Right ventricle myocardium inferior (tissue), 1 donor: ENCODE measurements at regions of chr4 and their contacts with region 1.

Region 1: DNA sequence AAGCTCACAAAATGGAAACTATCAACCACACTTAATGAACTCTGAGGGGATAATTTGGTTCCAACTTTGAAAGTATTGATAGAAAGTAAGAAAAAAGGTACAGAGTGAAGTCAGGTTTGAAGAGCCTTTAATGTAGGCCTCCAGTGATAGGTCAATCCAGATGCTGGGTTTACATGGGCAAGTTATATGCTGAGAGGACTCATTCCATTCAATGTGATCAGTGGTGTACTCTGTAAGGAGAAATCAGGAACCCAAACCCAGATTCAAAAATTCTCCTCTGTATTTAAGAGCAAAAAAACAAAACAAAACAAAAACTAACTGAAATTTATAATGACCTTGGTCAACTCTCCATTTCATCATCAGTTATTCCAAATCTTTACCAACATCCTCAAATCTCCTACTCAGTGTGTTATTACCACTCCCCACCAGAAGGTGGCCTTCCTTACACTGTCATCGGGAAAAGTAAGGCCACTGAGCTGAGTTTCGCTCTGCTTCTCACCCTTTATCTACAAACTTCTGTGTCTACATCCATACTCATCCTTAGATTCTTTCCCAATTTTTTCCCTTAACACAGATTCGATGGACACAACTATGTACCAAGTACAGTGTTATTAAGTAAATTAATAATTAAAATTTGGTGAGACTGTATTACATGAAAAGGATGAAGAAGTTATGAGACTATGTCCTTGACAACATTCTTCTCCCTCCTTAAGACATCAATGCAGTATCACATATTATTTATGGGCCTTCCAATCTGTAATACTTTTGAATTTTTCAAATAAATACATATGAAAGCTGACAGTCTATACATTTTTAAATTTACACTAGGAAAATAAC is 88.3 kb downstream of the ZAR1 start:
- DNase-seq: no peak
- ATAC-seq: peak; percentile 74

Region 2: DNA sequence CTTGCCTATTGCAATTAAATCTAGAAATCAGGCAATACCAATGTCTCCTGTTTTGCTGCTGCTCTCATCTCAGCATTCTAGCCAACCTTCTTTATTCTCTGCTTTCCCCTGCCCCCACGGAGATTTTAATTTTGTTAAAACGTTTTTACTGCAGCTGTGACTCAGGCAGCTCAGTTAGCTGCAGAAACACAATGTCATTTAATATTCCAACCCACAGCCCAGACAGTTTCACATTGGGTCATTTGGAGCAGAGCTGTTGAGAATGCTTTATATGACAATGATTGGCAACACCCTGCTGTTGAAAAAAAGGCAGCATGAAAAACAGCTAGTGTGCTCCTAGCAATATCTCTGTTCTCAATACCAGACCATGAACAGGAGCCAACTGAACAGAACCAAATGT is 107.8 kb before region 1 on chr4:
- intact Hi-C with region 1: no loop called
- DNase-seq: no peak
- ATAC-seq: no peak

Region 3: DNA sequence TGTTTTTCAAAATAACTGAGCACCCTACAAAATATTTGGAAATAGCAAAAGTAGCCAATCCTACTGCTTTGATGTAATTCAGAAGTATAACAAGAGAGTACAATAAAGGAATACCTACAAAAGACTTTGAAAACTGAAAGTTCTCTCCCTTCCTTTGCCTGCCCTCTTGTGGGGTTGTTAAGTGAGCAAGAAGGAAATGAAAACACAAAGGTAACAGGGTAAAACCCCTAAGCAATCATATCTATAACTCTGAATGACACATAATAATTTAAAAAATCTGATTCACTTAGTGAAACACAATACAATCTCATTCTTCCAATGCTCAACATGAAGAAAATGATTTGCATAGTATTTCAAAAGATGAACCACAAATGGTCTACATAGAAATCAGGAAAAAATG is 103.5 kb after region 1 on chr4:
- intact Hi-C with region 1: loop called (anchors 1 kb)
- DNase-seq: no peak
- ATAC-seq: no peak

Region 4: GRCh38 chr4:48830706-48831531 is 252.6 kb after region 1 on chr4 and contains the start of gene OCIAD1:
- intact Hi-C with region 1: loop called (anchors 5 kb)
- DNase-seq: peak; percentile 98
- ATAC-seq: peak; percentile 100
- total RNA-seq, gene OCIAD1: 128 TPM